Endothelial cell of umbilical vein (primary cell): ENCODE measurements at regions of chr6 and their contacts with region 1.

Region 1: DNA sequence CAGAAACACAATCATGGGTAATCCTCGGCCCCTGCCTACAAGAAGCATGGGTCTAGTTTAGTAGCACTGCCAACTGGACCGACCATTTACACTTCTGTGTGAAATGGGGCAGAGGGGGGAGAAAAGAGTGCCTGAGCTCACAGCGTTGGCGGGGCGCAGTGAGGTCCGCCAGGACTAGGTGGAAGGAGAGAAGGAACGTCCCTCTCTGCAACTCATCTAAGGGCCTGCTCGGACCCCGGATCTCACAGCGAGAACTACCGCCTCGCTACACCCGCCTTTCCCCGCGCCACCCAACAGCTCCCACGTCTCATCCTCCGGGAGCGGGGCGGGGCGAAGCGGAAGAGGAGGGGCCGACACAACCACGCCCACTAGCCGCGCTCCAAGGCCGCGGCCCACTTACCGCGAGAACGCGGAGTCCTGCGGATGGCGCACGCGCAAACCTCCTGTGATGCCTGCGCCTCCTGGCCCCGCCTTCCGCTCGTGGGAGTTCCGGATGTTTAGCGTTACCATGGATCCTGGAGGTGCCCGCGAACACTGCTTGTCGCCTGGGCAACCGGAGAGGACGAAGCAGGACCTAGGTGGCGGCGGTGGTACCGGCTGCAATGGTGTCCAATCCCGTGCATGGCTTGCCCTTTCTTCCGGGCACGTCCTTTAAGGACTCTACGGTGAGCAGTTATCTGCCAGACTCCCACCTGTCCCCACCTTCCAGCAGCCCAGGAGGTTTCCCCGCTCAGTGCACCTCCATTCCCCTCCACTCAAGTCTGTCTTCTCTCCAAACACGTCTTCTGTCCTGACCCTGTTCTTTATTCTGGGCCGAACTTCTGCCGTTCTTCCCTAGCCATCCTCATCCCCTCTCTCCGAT is at the start of gene EFHC1:
- DNase-seq: peak; percentile 98
- H3K4me3 ChIP-seq: peak within 1 kb of the TSS; percentile 29 to 73 (median 72)
- H3K27ac ChIP-seq: peak within 1 kb of the TSS; percentile 84
- H3K4me1 ChIP-seq: peaks cover 75% of the 10 kb centered on the region
- H3K27me3 ChIP-seq: no peaks in the 10 kb centered on the region
- CTCF ChIP-seq: no peak
- POLR2A ChIP-seq: peak; percentile 96
- total RNA-seq, gene EFHC1: 14.6 and 21.1 TPM in 2 replicates

Region 2: GRCh38 chr6:52361945-52362442 is 58.0 kb before region 1 on chr6 and contains the start of gene PAQR8:
- CTCF ChIA-PET with region 1: no interaction called
- POLR2A ChIA-PET with region 1: no interaction called
- dilution Hi-C with region 1: no loop called
- intact Hi-C with region 1: no loop called
- DNase-seq: peak; percentile 66
- H3K4me3 ChIP-seq: peak within 1 kb of the TSS; percentile 78 to 97 (median 88)
- H3K27ac ChIP-seq: peak within 1 kb of the TSS; percentile 41
- H3K4me1 ChIP-seq: peaks cover 12% of the 10 kb centered on the region
- H3K27me3 ChIP-seq: no peaks in the 10 kb centered on the region
- CTCF ChIP-seq: no peak
- POLR2A ChIP-seq: peak; percentile 42
- total RNA-seq, gene PAQR8: 6.0 TPM in 2 replicates

Region 3: GRCh38 chr6:52454556-52454955 is 34.5 kb after region 1 on chr6:
- CTCF ChIA-PET with region 1: interaction called, 7 read pairs
- POLR2A ChIA-PET with region 1: no interaction called
- dilution Hi-C with region 1: no loop called
- intact Hi-C with region 1: loop called (anchors 1 kb)
- DNase-seq: peak; percentile 57
- H3K4me3 ChIP-seq: no peak overlapping the region
- H3K27ac ChIP-seq: peak overlapping the region; percentile 1
- H3K4me1 ChIP-seq: peaks cover 8% of the 10 kb centered on the region
- H3K27me3 ChIP-seq: no peaks in the 10 kb centered on the region
- CTCF ChIP-seq: no peak
- POLR2A ChIP-seq: no peak

Region 4: GRCh38 chr6:52512199-52512598 is 92.2 kb after region 1 on chr6:
- CTCF ChIA-PET with region 1: interaction called, 7 read pairs
- POLR2A ChIA-PET with region 1: interaction called, 4 read pairs
- dilution Hi-C with region 1: no loop called
- intact Hi-C with region 1: loop called (anchors 1 kb)
- DNase-seq: peak; percentile 92
- H3K4me3 ChIP-seq: no peak overlapping the region
- H3K27ac ChIP-seq: peak overlapping the region; percentile 89
- H3K4me1 ChIP-seq: peaks cover 64% of the 10 kb centered on the region
- H3K27me3 ChIP-seq: no peaks in the 10 kb centered on the region
- CTCF ChIP-seq: no peak
- POLR2A ChIP-seq: no peak

Region 5: DNA sequence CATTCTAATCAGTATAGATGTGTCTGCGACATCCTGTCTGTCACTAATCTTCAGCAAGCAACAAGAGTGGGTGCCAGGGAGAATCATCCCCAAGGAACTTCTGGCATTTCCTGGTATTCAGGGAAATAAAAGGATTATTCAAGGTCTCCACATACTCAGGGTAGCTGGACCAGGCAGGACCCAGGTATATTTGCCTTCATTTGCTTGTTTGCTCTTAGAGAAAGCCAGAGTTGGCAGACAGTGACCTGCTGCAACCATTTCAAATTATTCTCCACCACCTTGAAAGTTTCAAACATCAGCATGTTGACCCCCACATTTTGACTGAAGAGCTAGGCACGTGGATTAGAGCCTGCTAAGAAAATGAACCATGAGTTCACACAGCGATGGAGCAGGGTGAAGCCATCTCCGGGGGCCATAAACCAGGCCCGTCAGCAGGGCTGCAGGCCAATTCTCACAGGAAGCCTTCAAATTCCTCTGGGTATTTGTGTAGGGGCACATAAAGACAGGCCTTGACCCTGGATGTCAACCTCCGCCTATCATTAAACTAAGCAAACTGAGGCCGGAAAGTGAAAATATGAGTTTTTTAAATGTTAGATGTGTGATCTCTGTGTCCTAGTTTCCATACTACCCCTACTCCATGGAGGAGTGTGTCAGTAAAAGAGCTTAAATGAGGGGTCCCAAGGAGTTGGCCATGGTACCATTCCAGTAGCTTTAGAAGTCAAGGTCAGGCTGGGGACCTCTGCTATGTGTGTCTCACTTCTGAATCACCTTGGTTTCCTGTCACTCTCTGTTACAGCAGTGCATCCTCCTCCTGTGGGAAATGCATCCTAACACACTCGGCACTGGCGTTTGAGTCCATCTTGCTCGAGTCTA is 123.9 kb after region 1 on chr6:
- CTCF ChIA-PET with region 1: interaction called, 5 read pairs
- POLR2A ChIA-PET with region 1: interaction called, 4 read pairs
- dilution Hi-C with region 1: loop called (anchors 25 kb)
- intact Hi-C with region 1: loop called (anchors 1 kb)
- DNase-seq: peak; percentile 67
- H3K4me3 ChIP-seq: peak overlapping the region in 1 of 3 experiments; percentile 21
- H3K27ac ChIP-seq: peak overlapping the region; percentile 78
- H3K4me1 ChIP-seq: peaks cover 79% of the 10 kb centered on the region
- H3K27me3 ChIP-seq: no peaks in the 10 kb centered on the region
- CTCF ChIP-seq: no peak
- POLR2A ChIP-seq: peak; percentile 72

Region 6: GRCh38 chr6:52598123-52598823 is 178.2 kb after region 1 on chr6:
- CTCF ChIA-PET with region 1: interaction called, 23 read pairs
- POLR2A ChIA-PET with region 1: interaction called, 4 read pairs
- dilution Hi-C with region 1: no loop called
- intact Hi-C with region 1: loop called (anchors 1 kb)
- DNase-seq: peak; percentile 54
- H3K4me3 ChIP-seq: no peak overlapping the region
- H3K27ac ChIP-seq: no peak overlapping the region
- H3K4me1 ChIP-seq: peaks cover 34% of the 10 kb centered on the region
- H3K27me3 ChIP-seq: no peaks in the 10 kb centered on the region
- CTCF ChIP-seq: peak; percentile 63 to 75
- POLR2A ChIP-seq: no peak

Region 7: GRCh38 chr6:52881996-52882841 is 462.2 kb after region 1 on chr6:
- CTCF ChIA-PET with region 1: no interaction called
- POLR2A ChIA-PET with region 1: no interaction called
- dilution Hi-C with region 1: no loop called
- intact Hi-C with region 1: loop called (anchors 10 kb)
- DNase-seq: peak; percentile 65
- H3K4me3 ChIP-seq: peak overlapping the region in 2 of 3 experiments; percentile 45 to 67
- H3K27ac ChIP-seq: no peak overlapping the region
- H3K4me1 ChIP-seq: peaks cover 4% of the 10 kb centered on the region
- H3K27me3 ChIP-seq: peaks cover 1 to 2% of the 10 kb centered on the region in 2 experiments
- CTCF ChIP-seq: peak; percentile 81 to 88
- POLR2A ChIP-seq: no peak